ENCODE measurements at regions of chr6 and their contacts with region 1.

Region 1: DNA sequence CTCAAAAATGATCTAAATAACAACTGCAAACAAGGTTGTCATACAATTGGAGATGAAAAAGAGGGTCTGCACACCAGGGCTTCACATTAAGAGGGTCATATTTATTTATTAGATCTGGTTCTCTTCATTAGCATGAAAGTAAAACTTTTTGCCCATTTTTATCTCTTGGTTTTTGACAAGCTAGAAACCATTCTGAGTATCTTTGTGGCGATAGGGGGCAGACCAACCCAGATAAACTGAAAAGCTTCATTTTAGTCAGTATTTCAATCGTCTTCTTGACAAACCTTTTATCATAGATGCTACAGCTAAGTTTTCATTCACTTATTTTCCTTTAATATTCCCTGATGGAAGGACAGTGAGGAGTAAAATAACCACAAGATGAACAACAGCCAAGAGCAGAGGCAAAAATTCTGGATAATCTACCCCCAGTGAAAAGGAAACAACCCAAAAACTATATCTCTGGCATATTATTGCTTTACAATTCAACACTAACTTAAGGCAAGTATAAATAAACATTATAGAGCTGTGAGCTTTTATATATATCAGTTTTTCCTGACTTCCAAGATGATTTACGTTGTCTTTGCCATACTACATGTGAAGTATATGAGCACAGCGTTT is 45.2 kb downstream of the THEMIS start:
- DNase-seq: peak; percentile 68
- ATAC-seq: peak; percentile 60
- H3K4me3 Mint-ChIP-seq: peak overlapping the region; percentile 39
- H3K27ac Mint-ChIP-seq: peak overlapping the region; percentile 69
- H3K4me1 Mint-ChIP-seq: peaks cover 70% of the 10 kb centered on the region
- H3K27me3 Mint-ChIP-seq: no peaks in the 10 kb centered on the region

Region 2: DNA sequence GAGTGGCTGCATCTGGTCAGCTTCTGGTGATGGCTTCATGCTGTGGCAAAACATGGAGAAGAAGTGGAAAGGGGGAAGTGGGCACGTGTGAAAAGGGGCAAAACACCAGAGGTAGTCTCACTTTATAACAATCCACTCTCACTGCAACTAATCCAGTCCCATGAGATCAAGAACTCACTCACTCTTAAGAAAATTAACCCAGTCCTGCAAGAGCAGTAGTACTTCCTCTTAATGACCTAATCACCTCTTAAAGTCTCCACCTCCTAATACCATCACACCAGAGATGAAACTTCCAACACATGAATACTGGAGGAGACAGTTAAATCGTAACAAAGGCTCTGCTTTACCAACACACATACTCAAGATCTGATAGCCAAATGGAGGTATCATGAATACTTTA is 107.4 kb before region 1 on chr6:
- CTCF ChIA-PET with region 1: interaction called, 13 read pairs
- POLR2A ChIA-PET with region 1: no interaction called
- intact Hi-C with region 1: no loop called
- DNase-seq: no peak
- ATAC-seq: peak; percentile 76
- H3K4me3 Mint-ChIP-seq: peak overlapping the region; percentile 23
- H3K27ac Mint-ChIP-seq: peak overlapping the region; percentile 83
- H3K4me1 Mint-ChIP-seq: peaks cover 61% of the 10 kb centered on the region
- H3K27me3 Mint-ChIP-seq: no peaks in the 10 kb centered on the region

Region 3: GRCh38 chr6:127841811-127842210 is 13.8 kb before region 1 on chr6:
- CTCF ChIA-PET with region 1: interaction called, 28 read pairs
- POLR2A ChIA-PET with region 1: no interaction called
- intact Hi-C with region 1: no loop called
- DNase-seq: no peak
- ATAC-seq: no peak
- H3K4me3 Mint-ChIP-seq: no peak overlapping the region
- H3K27ac Mint-ChIP-seq: no peak overlapping the region
- H3K4me1 Mint-ChIP-seq: peaks cover 44% of the 10 kb centered on the region
- H3K27me3 Mint-ChIP-seq: no peaks in the 10 kb centered on the region

Region 4: DNA sequence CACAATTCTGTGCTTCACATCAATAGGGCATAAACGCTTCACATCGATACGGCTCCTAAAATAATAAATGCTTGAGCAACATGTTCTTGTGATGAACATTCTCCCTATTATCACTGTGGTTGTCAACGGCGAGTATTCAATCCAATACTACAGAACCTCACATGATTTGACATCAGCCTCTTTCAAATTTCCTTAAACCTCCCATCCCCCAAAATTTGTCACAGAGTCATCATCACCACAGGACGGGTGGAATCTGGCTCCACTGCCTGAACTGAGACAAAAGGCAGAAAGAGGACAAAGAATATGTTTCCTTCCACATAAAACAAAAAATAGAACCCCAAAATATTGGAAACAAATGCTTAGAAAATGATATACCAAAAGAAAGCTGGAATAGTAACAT is 37.9 kb after region 1 on chr6:
- CTCF ChIA-PET with region 1: interaction called, 10 read pairs
- POLR2A ChIA-PET with region 1: no interaction called
- intact Hi-C with region 1: loop called in 1 of 2 experiments (anchors 2 kb)
- DNase-seq: peak; percentile 63
- ATAC-seq: peak; percentile 82
- H3K4me3 Mint-ChIP-seq: peak overlapping the region; percentile 77
- H3K27ac Mint-ChIP-seq: peak overlapping the region; percentile 96
- H3K4me1 Mint-ChIP-seq: peaks cover 58% of the 10 kb centered on the region
- H3K27me3 Mint-ChIP-seq: no peaks in the 10 kb centered on the region

Region 5: GRCh38 chr6:127971945-127972391 is 116.3 kb after region 1 on chr6:
- CTCF ChIA-PET with region 1: interaction called, 14 read pairs
- POLR2A ChIA-PET with region 1: no interaction called
- intact Hi-C with region 1: loop called in 1 of 2 experiments (anchors 2 kb)
- DNase-seq: peak; percentile 64
- ATAC-seq: peak; percentile 89
- H3K4me3 Mint-ChIP-seq: peak overlapping the region; percentile 70
- H3K27ac Mint-ChIP-seq: peak overlapping the region; percentile 90
- H3K4me1 Mint-ChIP-seq: peaks cover 60% of the 10 kb centered on the region
- H3K27me3 Mint-ChIP-seq: no peaks in the 10 kb centered on the region

Region 6: GRCh38 chr6:128327890-128328289 is 472.2 kb after region 1 on chr6:
- CTCF ChIA-PET with region 1: interaction called, 22 read pairs
- POLR2A ChIA-PET with region 1: no interaction called
- intact Hi-C with region 1: loop called (anchors 1 to 2 kb)
- DNase-seq: peak; percentile 30
- ATAC-seq: peak; percentile 80
- H3K4me3 Mint-ChIP-seq: no peak overlapping the region
- H3K27ac Mint-ChIP-seq: no peak overlapping the region
- H3K4me1 Mint-ChIP-seq: no peaks in the 10 kb centered on the region
- H3K27me3 Mint-ChIP-seq: no peaks in the 10 kb centered on the region

Measured in activated CD4-positive, alpha-beta T cell treated with anti-CD3 and anti-CD28 coated beads for 36 hours (primary cell).